Activated CD4-positive, alpha-beta T cell treated with anti-CD3 and anti-CD28 coated beads for 36 hours (primary cell): ENCODE measurements at regions of chr17 and their contacts with region 1.

Region 1: DNA sequence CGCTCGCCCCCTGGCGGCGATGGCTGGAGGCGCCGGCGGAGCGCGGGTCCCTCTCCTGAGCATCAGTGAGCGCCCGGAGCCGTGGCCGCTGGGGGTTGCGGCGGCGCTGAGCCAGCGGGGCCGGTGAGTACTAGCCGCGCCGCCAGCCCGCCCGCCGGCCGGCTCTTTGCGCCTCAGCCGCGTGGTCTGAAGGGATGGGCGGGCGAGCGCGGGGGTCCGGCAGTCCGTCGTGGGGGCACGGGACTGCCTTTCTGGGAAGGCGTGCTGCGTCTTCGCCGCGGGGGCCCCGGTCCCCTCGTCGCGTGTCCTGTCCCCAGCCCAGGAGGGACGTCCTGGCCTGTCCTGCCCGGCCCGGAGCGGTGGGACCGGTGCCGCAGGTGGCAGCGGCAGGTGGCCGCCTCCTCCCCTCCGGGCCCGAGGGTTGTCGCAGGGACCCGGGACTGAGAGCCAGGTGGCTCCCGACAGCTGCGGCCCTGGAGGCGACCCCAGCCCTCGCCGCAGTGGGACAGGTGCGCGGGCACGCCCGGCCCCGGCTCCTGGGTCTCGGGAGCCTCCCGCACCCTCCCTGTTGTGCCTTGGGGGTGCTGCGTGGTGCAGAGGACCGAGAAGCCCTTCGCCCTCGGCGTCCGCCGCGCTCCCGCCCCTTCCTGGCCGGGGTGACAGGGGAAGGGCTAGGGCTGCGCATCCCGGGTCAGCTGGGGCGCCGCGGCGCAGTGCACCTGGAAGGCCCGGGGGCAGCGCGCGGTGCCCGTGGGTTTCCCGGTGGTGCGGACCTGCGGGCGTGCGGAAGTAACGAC is at the start of gene SPECC1:
- DNase-seq: peak; percentile 92
- ATAC-seq: peak; percentile 99
- H3K4me3 Mint-ChIP-seq: peak within 1 kb of the TSS; percentile 77
- H3K27ac Mint-ChIP-seq: peak within 1 kb of the TSS; percentile 17
- H3K4me1 Mint-ChIP-seq: peaks cover 11% of the 10 kb centered on the region
- H3K27me3 Mint-ChIP-seq: peaks cover 37% of the 10 kb centered on the region
- total RNA-seq, gene SPECC1: 6.1 to 10.4 TPM

Region 2: DNA sequence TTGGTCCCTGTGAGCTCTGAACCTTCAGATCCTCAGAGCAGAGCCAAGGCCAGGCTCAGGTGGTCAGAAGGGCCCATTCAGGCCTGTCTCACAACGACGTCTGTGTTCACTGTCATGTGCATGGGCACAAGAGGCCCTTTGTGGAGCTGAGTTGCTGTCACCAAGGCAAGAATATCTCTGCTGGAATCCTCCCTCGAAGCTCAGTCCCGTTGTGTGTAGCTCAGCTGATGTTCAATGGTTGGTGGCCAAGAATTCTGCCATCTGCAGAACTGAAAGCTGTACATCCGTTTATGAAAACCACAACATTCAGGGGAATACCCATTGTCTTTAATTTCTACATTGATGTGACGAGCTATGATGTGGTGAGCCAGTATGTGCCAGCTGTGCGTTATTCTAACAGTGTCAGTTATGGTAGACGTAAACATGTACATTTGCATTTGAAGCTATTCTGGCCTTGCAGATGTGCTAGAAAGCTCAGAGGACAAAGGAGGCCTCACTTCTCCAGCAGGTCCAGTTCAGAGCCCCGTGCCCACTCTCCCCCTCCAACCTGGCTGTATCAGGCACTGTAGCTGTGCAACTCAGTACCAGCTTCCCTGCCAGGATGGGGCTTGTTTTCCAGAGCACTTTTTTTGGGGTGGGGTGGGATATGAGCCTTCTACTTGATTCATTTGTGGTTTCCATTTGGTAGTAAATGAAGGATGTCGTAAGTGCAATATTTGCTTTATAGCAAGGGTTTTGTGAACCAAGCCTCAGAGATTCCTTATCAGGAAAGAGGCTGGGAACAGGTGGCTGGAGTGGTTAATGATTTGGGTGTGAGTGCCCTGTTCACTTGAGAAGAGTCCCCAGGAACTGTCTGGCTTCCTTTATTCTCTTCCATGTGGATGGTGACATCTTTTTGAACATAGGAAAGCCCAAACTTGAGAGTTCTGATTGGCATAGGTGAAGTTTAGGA is 703.1 kb before region 1 on chr17:
- CTCF ChIA-PET with region 1: no interaction called
- POLR2A ChIA-PET with region 1: no interaction called
- intact Hi-C with region 1: no loop called
- DNase-seq: peak; percentile 57
- ATAC-seq: peak; percentile 95
- H3K4me3 Mint-ChIP-seq: no peak overlapping the region
- H3K27ac Mint-ChIP-seq: no peak overlapping the region
- H3K4me1 Mint-ChIP-seq: peaks cover 20% of the 10 kb centered on the region
- H3K27me3 Mint-ChIP-seq: peaks cover 32% of the 10 kb centered on the region

Region 3: DNA sequence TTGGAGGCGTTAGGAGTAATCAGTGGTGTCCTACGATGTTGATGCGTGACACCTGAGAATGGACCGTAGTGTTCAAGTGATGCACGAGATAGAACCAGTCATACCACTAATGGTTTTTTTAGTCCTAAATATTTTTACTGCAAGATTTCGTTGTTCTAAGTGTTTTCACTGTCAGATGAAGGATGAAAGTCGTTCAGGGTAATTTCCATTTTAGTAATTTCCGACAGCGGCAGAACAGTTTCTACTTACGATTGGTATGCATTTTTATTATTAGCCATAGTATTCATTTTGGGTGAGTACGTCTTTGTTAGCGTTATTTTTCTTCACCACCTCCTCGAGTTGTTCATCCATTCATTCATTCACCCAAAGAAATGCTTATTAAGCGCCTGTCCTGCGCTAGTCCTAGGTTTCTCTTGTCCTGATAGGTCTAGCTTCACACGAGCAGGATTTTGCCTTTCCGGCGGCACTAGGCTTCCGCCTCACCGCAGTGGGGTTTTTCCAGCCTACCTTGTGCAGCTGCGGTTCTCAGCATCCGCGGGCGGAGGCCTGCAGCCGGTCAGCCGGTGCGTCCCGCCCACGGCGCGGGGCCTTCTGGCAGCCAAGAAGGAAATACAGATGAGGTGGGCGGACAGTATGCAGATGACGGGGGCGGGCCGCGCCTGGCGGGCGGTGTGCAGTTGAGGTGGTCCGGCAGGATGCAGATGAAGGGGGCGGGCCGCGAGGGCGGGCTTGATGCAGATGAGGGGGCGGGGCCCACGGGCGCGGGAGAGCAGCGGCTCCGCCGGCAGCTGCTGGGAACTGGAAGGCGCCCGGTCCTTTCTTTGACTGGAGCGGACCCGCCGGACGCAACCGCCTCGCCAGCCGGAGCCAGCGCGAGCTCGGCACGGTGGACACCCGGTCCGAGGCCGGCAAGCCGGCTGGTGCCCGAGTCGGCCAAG is 146.0 kb after region 1 on chr17:
- CTCF ChIA-PET with region 1: interaction called, 4 read pairs
- POLR2A ChIA-PET with region 1: no interaction called
- intact Hi-C with region 1: loop called in 1 of 2 experiments (anchors 1 kb)
- DNase-seq: peak; percentile 96
- ATAC-seq: peak; percentile 88
- H3K4me3 Mint-ChIP-seq: no peak overlapping the region
- H3K27ac Mint-ChIP-seq: no peak overlapping the region
- H3K4me1 Mint-ChIP-seq: peaks cover 4% of the 10 kb centered on the region
- H3K27me3 Mint-ChIP-seq: peaks cover 5% of the 10 kb centered on the region